T-cell (primary cell): ENCODE measurements at regions of chr2 and their contacts with region 1.

Region 1: GRCh38 chr2:134218930-134219658 is 34.8 kb upstream of the MGAT5 start:
- DNase-seq: peak in 34 of 35 experiments; percentile 21 to 63 (median 38)
- ATAC-seq: peak; percentile 70 to 84 (median 78)
- H3K4me3 ChIP-seq: peak overlapping the region; percentile 5 to 15
- H3K4me3 Mint-ChIP-seq: peak overlapping the region; percentile 48 to 75 (median 61)
- H3K27ac ChIP-seq: peak overlapping the region; percentile 84
- H3K27ac Mint-ChIP-seq: peak overlapping the region; percentile 88 to 94
- H3K4me1 ChIP-seq: peaks cover 44 to 48% of the 10 kb centered on the region in 2 experiments
- H3K4me1 Mint-ChIP-seq: peaks cover 59 to 77% (median 66%) of the 10 kb centered on the region in 3 donors
- H3K27me3 ChIP-seq: no peaks in the 10 kb centered on the region
- H3K27me3 Mint-ChIP-seq: no peaks in the 10 kb centered on the region

Region 2: GRCh38 chr2:134154246-134154645 is 64.8 kb before region 1 on chr2:
- CTCF ChIA-PET with region 1: no interaction called
- POLR2A ChIA-PET with region 1: no interaction called
- DNase-seq: peak in 1 of 35 experiments; percentile 17
- ATAC-seq: no peak
- H3K4me3 ChIP-seq: no peak overlapping the region
- H3K4me3 Mint-ChIP-seq: no peak overlapping the region
- H3K27ac ChIP-seq: no peak overlapping the region
- H3K27ac Mint-ChIP-seq: no peak overlapping the region
- H3K4me1 ChIP-seq: peaks cover 2 to 28% of the 10 kb centered on the region in 2 experiments
- H3K4me1 Mint-ChIP-seq: peaks cover 56 to 63% (median 61%) of the 10 kb centered on the region in 3 donors
- H3K27me3 ChIP-seq: no peaks in the 10 kb centered on the region
- H3K27me3 Mint-ChIP-seq: no peaks in the 10 kb centered on the region

Region 3: DNA sequence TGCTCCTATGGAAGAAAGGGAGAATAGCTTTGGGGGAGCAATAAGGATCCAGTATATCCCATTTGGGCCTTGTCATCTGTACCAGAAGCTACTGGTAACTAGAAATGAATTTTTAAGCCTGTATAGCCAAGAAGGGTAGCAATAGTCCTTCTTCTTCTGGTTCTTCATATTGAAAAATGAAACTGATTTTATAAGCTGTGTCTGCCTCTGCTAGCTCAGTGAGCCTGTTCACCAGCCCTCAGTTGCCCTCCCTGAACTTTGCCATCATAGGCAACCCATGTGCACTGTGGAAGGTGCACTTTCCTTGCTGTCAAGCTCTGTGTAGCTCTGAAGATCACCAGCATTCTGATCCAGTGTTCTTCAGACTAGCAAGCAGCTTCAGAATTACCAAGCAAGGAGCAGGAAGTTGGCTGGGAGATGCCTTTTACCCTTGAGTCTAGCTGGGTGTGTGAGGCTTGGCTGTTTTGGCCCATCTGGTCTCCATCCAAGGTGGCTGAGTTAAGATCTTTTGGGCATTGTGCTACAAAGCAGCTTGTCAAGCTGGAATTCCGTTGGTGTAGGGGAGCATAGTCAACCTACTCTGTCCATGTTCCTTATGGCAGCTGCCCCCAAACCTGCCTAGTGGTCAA is 21.0 kb before region 1 on chr2:
- CTCF ChIA-PET with region 1: interaction called, 4 to 8 read pairs
- POLR2A ChIA-PET with region 1: interaction called in 1 of 2 experiments, 10 read pairs
- DNase-seq: peak in 1 of 35 experiments; percentile 22
- ATAC-seq: peak; percentile 31 to 57 (median 52)
- H3K4me3 ChIP-seq: no peak overlapping the region
- H3K4me3 Mint-ChIP-seq: peak overlapping the region; percentile 52 to 57 (median 57)
- H3K27ac ChIP-seq: no peak overlapping the region
- H3K27ac Mint-ChIP-seq: peak overlapping the region; percentile 72 to 85
- H3K4me1 ChIP-seq: peaks cover 20 to 28% of the 10 kb centered on the region in 2 experiments
- H3K4me1 Mint-ChIP-seq: peaks cover 83 to 88% (median 84%) of the 10 kb centered on the region in 3 donors
- H3K27me3 ChIP-seq: no peaks in the 10 kb centered on the region
- H3K27me3 Mint-ChIP-seq: no peaks in the 10 kb centered on the region